Aorta (tissue), 5 donors: ENCODE measurements at regions of chr14 and their contacts with region 1.

Region 1: DNA sequence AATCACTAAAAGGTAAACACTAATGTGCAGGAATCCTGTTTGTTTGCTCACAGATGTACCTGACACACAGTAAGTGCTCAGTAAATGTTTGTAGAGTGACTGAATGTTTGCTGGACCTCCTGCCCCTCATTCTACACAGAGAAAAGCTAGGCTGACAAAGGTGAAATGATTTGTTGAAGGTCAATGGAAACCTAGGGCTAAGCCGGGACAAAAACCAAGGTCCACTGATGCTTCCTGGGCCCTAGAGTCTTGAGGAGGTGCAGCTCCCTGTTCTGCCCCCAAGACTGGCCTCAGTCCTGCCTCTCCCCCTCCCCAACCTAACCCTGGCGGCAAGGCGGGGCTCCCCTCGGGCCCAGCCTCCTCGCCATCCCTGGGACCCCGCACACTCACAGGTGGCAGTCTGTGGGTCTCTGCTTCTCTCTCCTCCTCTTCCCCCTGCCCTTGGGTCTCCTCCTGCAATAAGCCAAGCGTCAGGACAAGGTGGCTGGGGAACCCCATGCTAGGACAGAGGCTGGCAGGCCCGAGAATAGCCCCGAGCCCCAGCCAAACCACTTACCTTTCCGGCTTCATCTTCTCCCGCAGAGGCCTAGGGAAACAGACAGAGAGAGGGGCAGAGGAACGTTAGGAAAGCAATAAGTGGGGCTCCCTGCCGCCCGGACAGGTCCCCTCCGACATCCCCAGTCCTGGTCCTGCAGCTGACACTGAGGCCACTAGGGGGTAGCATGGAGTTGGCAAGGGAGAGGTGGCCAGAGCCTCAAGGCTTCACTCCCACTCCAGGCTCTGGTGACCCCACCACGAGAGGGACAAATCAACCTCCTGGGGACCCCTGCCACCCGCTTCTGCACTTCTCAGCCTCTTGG is 9.3 kb downstream of the PGF start:
- DNase-seq: peak; percentile 85 to 92
- ATAC-seq: peak; percentile 88
- H3K4me3 ChIP-seq: no peak overlapping the region
- H3K27ac ChIP-seq: peak overlapping the region in 1 of 2 donors; percentile 19
- H3K4me1 ChIP-seq: no peaks in the 10 kb centered on the region
- H3K27me3 ChIP-seq: no peaks in the 10 kb centered on the region

Region 2: DNA sequence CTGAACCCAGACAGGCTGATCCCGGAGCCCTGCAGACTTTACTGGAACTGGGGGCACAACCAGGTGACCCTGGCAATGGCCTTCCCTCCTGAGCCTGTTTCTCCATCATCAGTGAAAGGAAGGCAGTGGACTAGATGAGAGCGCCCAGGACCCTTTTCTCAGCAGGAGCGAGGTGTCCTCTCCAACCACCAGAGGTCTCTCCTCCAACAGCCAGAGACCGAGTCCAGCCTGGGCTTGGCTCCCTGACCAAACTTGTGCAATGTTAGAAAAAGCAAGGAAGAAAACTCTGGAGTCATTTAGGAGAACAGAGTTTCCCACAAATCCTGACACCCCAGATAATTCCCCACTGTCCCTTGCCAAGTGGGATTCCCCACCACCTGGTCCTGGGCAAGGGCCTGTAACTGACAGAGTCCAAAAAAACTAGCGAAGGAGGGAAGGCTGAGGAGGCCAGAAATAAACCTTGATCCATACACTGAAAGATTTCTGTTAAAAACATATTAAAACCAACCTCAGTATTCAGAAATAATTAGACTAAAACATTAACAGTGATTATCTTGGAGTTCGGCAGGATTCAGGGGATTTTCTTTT is 32.0 kb before region 1 on chr14:
- intact Hi-C with region 1: loop called in 1 of 2 experiments (anchors 5 kb)
- DNase-seq: peak; percentile 30 to 86
- ATAC-seq: peak; percentile 78
- H3K4me3 ChIP-seq: no peak overlapping the region
- H3K27ac ChIP-seq: no peak overlapping the region
- H3K4me1 ChIP-seq: no peaks in the 10 kb centered on the region
- H3K27me3 ChIP-seq: no peaks in the 10 kb centered on the region

Region 3: DNA sequence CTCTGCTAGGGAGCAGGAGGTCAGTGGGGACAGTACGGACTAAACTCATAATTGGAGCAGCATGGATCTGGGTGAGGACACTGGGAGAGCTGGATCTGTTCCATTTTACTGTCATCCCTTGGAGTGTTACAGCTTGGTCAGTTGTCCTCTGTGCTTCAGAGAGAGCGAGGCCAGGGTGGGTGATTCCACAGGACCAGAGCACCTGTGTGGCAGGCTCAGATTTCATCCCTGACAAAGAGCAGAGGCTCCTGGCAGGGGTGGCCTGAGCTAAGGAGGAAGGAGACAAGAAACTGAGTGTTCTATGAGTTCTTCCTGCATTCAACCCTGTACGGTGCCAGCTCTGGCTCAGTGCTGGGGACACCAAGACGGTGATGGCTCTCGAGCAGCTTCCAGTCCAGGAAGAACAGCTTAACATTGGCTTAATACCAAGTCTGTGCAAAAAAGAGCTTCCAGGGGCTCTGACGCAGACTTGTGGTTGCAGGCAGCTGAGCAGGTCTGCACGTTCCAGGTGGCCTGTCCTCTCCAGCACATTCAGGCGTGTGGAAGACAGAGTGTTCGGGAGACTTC is 17.7 kb after region 1 on chr14:
- intact Hi-C with region 1: no loop called
- DNase-seq: peak in 1 of 2 donors; percentile 34
- ATAC-seq: no peak
- H3K4me3 ChIP-seq: no peak overlapping the region
- H3K27ac ChIP-seq: no peak overlapping the region
- H3K4me1 ChIP-seq: no peaks in the 10 kb centered on the region
- H3K27me3 ChIP-seq: no peaks in the 10 kb centered on the region

Region 4: DNA sequence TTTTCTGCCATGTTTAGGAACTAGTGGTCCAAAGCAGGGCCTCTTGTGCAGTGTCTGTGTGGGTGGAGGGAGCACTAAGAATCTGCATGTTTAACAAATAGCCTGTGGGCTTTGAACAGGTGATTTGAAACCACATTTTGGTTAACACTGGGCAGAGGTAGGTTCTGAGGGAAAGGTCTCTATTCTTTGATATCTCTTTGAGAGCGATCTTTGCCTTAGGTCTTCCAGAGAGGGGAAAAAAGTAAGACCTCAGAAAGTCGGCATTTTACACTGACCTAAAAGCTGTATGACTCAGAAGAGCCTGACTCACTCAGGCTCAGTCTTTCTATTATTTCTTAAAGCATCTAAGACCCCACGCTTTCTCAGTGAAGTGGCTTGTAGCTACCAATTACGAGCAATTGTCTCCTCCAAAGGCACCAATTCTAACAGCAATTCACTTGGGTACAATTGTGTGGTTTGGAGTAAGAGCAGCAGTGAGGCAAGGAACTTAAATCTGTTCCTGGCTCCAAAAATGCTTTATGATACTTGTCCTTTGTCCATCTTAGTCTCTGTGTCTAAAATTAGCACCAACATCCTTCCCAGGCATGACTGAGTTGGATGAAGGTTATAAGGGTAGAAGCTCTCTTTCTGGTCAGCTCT is 65.4 kb after region 1 on chr14:
- intact Hi-C with region 1: loop called (anchors 5 kb)
- DNase-seq: no peak
- ATAC-seq: peak; percentile 70
- H3K4me3 ChIP-seq: no peak overlapping the region
- H3K27ac ChIP-seq: peak overlapping the region; percentile 69 to 87
- H3K4me1 ChIP-seq: peaks cover 0 to 10% of the 10 kb centered on the region in 2 donors
- H3K27me3 ChIP-seq: no peaks in the 10 kb centered on the region

Region 5: DNA sequence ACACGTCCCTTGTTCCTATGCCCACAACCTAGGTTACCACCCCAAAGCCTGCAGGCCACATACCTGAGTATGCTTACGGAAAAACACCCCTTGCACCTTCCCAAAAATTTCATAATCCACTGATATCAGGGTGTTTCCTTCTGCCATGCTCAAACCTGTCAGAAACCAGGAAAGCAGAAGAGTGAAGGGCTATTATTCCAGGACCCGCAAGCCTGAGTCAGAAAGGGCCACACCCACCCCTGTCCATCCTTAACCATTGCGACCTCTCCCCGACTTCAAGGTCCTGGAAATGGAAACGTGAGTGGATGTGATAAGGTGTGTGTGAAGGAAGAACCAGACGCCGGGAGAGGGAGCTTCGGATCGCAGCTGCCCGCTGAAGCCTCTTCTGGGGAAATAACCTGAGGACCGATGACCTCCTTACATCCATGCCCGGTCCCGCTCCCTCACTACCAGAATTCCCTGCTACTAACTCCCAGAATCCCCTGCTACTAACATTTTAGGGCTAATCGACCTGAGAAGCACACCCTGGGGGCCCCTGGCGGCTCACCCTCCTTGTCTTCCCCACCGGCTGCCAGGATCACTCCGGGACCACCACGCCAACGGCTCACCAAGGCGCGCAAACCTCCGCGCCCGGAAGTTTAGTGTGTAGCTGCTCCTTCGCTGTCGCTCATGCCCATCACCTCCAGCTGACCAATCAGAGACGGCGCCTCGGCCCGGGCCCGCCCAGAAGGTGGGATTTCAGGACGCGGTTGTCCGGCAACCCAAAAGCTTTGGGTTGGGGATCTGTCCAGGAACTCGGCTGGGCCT is 117.6 kb after region 1 on chr14 and contains the start of gene ACYP1:
- intact Hi-C with region 1: loop called in 1 of 2 experiments (anchors 10 kb)
- DNase-seq: peak; percentile 94 to 97
- ATAC-seq: peak; percentile 96
- H3K4me3 ChIP-seq: peak within 1 kb of the TSS; percentile 56 to 82
- H3K27ac ChIP-seq: no peak within 1 kb of the TSS
- H3K4me1 ChIP-seq: peaks cover 0 to 2% of the 10 kb centered on the region in 2 donors
- H3K27me3 ChIP-seq: no peaks in the 10 kb centered on the region
- total RNA-seq, gene ACYP1: 10.5 to 23.9 TPM

Region 6: DNA sequence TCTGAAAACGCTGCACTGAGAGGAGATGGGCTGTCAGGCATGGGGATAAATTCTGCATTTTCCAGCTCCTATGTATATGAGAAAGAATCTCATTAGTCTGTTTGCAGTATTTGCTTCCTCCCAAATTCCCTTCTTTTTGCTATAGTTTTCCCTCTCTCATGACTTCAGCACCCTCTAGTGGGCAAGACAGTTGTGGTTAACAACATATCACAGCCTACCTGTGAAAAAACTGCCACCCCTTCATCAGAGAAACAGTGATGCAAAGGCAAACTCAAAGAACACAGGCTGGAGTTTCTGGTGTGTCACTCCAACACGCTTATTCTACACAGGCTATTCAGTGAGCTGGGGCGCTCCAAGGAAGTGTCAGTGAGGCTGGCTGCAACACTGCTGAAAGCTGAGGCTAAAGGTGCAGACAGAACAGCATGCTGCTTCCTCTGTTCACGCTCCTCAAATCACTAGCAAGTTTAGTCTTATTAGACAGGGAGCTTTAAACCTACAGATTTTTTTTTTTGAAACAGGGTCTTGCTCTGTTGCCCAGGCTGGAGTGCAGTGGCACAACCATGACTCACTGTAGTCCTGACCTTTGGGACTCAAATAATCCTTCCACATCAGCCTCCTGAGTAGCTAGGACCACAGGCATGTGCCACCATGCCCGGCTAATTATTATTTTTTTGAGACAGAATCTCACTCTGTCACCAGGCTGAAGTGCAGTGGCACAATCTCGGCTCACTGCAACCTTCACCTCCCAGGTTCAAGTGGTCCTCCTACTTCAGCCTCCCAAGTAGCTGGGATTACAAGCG is 142.7 kb after region 1 on chr14:
- intact Hi-C with region 1: loop called in 1 of 2 experiments (anchors 2 kb)
- DNase-seq: no peak
- ATAC-seq: no peak
- H3K4me3 ChIP-seq: no peak overlapping the region
- H3K27ac ChIP-seq: no peak overlapping the region
- H3K4me1 ChIP-seq: no peaks in the 10 kb centered on the region
- H3K27me3 ChIP-seq: no peaks in the 10 kb centered on the region